ENCODE measurements at regions of chr6 and their contacts with region 1.

Region 1: DNA sequence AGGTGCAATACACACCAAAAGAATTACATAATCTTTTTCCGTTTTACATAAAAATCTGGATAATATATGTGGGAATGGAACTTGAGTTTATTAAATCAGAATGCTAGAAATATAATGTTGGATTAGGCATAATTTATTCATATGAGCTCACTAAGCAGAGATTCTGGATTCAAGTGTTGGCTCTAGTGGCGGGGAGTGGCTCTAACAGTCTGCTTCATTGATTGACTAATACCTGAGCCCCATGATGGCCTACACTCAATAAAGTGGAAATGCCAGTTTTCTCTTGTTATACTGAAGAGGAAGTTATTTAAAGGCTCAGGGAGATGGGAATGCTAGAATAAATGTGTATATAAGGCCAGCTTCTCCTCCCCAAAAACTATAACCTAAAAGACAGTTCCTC is 285.5 kb upstream of the MOCS1 start:
- DNase-seq: no peak
- ATAC-seq: no peak
- H3K4me3 ChIP-seq: no peak overlapping the region
- H3K4me3 Mint-ChIP-seq: no peak overlapping the region
- H3K27ac ChIP-seq: no peak overlapping the region
- H3K27ac Mint-ChIP-seq: no peak overlapping the region
- H3K4me1 ChIP-seq: no peaks in the 10 kb centered on the region
- H3K4me1 Mint-ChIP-seq: no peaks in the 10 kb centered on the region
- H3K27me3 ChIP-seq: no peaks in the 10 kb centered on the region
- H3K27me3 Mint-ChIP-seq: peaks cover 7% of the 10 kb centered on the region
- CTCF ChIP-seq: no peak

Region 2: GRCh38 chr6:40042242-40042641 is 177.6 kb before region 1 on chr6:
- CTCF ChIA-PET with region 1: no interaction called
- POLR2A ChIA-PET with region 1: no interaction called
- intact Hi-C with region 1: no loop called
- DNase-seq: no peak
- ATAC-seq: no peak
- H3K4me3 ChIP-seq: no peak overlapping the region
- H3K4me3 Mint-ChIP-seq: no peak overlapping the region
- H3K27ac ChIP-seq: no peak overlapping the region
- H3K27ac Mint-ChIP-seq: no peak overlapping the region
- H3K4me1 ChIP-seq: no peaks in the 10 kb centered on the region
- H3K4me1 Mint-ChIP-seq: no peaks in the 10 kb centered on the region
- H3K27me3 ChIP-seq: no peaks in the 10 kb centered on the region
- H3K27me3 Mint-ChIP-seq: peaks cover 15% of the 10 kb centered on the region
- CTCF ChIP-seq: no peak

Region 3: DNA sequence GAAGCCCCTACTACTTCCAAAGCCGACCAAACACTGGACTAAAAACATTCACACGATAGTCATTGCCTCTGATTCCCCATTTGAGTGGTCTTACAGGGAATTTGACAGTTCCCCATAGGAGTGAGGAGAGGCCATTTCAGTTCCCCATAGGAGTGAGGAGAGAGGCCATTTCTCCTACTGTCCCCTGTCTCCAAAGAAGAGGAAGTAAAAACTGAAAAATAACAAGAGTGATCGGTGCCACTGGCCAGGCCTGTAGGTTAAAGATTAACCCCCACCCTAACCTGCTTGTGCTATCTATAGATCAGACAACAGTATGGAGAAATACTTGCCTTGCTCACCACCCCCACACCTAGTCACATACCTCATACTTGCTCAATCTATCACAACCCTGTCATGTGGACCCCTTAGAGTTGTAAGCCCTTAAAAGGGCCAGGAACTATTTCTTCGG is 81.5 kb before region 1 on chr6:
- CTCF ChIA-PET with region 1: no interaction called
- POLR2A ChIA-PET with region 1: no interaction called
- intact Hi-C with region 1: no loop called
- DNase-seq: no peak
- ATAC-seq: no peak
- H3K4me3 ChIP-seq: no peak overlapping the region
- H3K4me3 Mint-ChIP-seq: no peak overlapping the region
- H3K27ac ChIP-seq: no peak overlapping the region
- H3K27ac Mint-ChIP-seq: no peak overlapping the region
- H3K4me1 ChIP-seq: no peaks in the 10 kb centered on the region
- H3K4me1 Mint-ChIP-seq: no peaks in the 10 kb centered on the region
- H3K27me3 ChIP-seq: peaks cover 0 to 2% of the 10 kb centered on the region in 2 experiments
- H3K27me3 Mint-ChIP-seq: peaks cover 2% of the 10 kb centered on the region
- CTCF ChIP-seq: no peak

Region 4: DNA sequence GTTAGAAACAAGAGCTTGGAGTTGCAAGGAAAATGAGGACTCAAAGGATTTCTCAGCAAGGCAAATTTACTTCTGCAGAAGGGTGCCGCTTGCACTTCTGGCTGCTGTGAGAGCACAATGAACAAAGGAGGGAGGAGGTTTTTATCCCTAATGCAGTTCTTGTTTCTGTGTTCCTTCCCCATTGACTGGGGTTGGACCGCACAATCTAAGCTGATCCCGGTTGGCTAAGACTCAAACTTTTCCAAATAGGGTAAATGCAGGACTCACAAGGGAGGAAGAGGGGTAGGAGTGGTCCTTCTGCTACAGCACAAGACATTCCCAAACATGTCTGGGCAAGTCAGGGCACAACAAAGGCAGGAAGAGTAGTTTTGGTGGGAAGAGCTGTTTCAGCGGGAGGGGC is 35.9 kb before region 1 on chr6:
- CTCF ChIA-PET with region 1: no interaction called
- POLR2A ChIA-PET with region 1: no interaction called
- intact Hi-C with region 1: loop called in 1 of 2 experiments (anchors 2 kb)
- DNase-seq: no peak
- ATAC-seq: no peak
- H3K4me3 ChIP-seq: no peak overlapping the region
- H3K4me3 Mint-ChIP-seq: no peak overlapping the region
- H3K27ac ChIP-seq: no peak overlapping the region
- H3K27ac Mint-ChIP-seq: no peak overlapping the region
- H3K4me1 ChIP-seq: no peaks in the 10 kb centered on the region
- H3K4me1 Mint-ChIP-seq: no peaks in the 10 kb centered on the region
- H3K27me3 ChIP-seq: no peaks in the 10 kb centered on the region
- H3K27me3 Mint-ChIP-seq: peaks cover 18% of the 10 kb centered on the region
- CTCF ChIP-seq: no peak